A673 (cell line): ENCODE measurements at regions of chr22 and their contacts with region 1.

Region 1: DNA sequence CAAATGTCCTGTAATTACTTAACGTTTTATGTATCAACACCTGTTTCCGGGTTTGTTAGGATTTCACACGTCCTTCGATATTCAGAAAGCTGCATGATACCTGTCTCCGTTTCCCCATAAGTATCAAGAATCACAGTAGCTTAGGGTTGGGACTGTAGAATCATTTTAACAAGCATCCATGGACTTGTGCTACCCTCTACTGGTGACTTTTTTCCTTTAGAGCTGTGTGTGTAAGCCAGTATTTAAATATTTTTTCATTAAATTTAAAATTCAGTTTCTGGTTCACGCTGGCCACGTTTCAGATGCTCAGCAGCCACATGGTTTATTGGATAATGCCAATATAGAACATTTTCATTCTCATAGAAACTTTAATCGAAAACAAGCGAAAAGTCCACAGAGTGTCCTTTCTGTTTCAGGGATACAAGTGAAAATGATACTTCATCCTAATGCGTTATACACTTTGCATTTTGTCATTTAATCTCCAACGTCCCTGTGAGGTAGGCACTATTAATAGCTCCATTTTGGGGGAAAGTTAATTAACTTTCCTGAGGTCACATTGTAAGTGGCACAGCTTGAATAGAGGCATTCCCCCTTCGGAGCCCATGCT is 61.5 kb upstream of the SLC25A18 start:
- DNase-seq: peak; percentile 76
- H3K4me3 ChIP-seq: no peak overlapping the region
- H3K27ac ChIP-seq: no peak overlapping the region
- H3K4me1 ChIP-seq: no peaks in the 10 kb centered on the region
- H3K27me3 ChIP-seq: no peaks in the 10 kb centered on the region
- CTCF ChIP-seq: peak; percentile 79

Region 2: GRCh38 chr22:17074648-17075002 is 427.2 kb before region 1 on chr22:
- CTCF ChIA-PET with region 1: interaction called, 8 read pairs
- POLR2A ChIA-PET with region 1: no interaction called
- intact Hi-C with region 1: loop called (anchors 5 kb)
- DNase-seq: no peak
- H3K4me3 ChIP-seq: no peak overlapping the region
- H3K27ac ChIP-seq: no peak overlapping the region
- H3K4me1 ChIP-seq: no peaks in the 10 kb centered on the region
- H3K27me3 ChIP-seq: peaks cover 4% of the 10 kb centered on the region
- CTCF ChIP-seq: no peak

Region 3: GRCh38 chr22:17171313-17172171 is 330.2 kb before region 1 on chr22:
- CTCF ChIA-PET with region 1: interaction called, 46 read pairs
- POLR2A ChIA-PET with region 1: no interaction called
- intact Hi-C with region 1: loop called (anchors 1 kb)
- DNase-seq: peak; percentile 74
- H3K4me3 ChIP-seq: peak overlapping the region; percentile 69
- H3K27ac ChIP-seq: peak overlapping the region; percentile 65
- H3K4me1 ChIP-seq: no peaks in the 10 kb centered on the region
- H3K27me3 ChIP-seq: no peaks in the 10 kb centered on the region
- CTCF ChIP-seq: peak; percentile 79

Region 4: GRCh38 chr22:17199003-17199731 is 302.6 kb before region 1 on chr22:
- CTCF ChIA-PET with region 1: no interaction called
- POLR2A ChIA-PET with region 1: no interaction called
- intact Hi-C with region 1: loop called (anchors 10 kb)
- DNase-seq: peak; percentile 25
- H3K4me3 ChIP-seq: no peak overlapping the region
- H3K27ac ChIP-seq: no peak overlapping the region
- H3K4me1 ChIP-seq: no peaks in the 10 kb centered on the region
- H3K27me3 ChIP-seq: no peaks in the 10 kb centered on the region
- CTCF ChIP-seq: no peak

Region 5: GRCh38 chr22:17266251-17266971 is 235.4 kb before region 1 on chr22:
- CTCF ChIA-PET with region 1: interaction called, 4 read pairs
- POLR2A ChIA-PET with region 1: no interaction called
- intact Hi-C with region 1: loop called (anchors 5 kb)
- DNase-seq: peak; percentile 98
- H3K4me3 ChIP-seq: peak overlapping the region; percentile 10
- H3K27ac ChIP-seq: peak overlapping the region; percentile 94
- H3K4me1 ChIP-seq: peaks cover 63% of the 10 kb centered on the region
- H3K27me3 ChIP-seq: no peaks in the 10 kb centered on the region
- CTCF ChIP-seq: 0 out of 2 replicates have a peak, but pooled peaks have one; percentile 13

Region 6: DNA sequence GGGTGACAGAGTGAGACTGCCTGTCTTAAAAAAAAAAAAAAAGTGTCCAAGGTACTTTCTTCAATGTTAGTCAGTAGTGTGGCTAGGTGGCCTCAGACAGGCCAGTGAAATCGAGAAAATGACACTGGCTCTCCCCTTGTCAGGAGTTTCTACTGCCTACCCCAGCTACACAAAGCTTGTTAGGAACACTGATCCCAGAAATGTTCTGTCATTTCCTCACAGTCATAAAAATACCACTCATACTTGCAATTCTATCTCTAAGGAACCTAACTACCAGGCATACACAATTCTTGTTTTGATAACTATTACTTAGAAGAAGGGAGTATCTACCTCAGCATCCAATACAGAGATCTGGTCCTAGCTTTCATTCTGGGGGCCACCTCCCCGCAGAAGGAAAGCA is 95.4 kb after region 1 on chr22:
- CTCF ChIA-PET with region 1: no interaction called
- POLR2A ChIA-PET with region 1: no interaction called
- intact Hi-C with region 1: no loop called
- DNase-seq: no peak
- H3K4me3 ChIP-seq: no peak overlapping the region
- H3K27ac ChIP-seq: no peak overlapping the region
- H3K4me1 ChIP-seq: no peaks in the 10 kb centered on the region
- H3K27me3 ChIP-seq: no peaks in the 10 kb centered on the region
- CTCF ChIP-seq: no peak

Region 7: DNA sequence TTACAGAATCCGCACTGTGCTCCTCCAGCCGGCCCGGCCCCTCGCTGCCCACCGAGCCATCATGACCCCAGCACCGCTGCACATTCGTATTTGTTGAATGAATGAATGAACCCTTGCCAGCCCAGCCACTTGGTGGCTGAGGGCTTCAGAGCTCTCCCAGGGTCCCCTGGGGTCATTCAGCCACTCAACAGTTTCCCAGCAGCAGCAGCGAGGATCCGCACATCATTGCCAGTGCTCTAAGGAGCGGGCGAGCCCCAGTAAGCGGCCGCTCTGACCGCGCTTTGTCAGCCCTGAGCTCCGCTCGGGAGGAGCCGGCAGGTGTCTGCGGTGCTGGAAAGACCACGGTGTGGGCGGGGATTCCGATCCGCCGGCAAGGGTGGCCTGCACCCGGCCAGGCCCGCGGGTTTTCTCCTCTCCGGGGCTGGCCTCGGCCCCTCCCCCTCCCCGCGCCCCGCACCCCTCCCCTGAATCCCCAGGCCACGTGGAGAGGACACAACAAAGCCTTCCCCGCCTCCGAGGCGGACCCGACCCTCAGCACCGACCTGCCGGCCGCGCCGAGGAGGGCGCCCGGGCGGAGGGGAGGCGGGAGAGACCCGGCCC is 271.9 kb after region 1 on chr22:
- CTCF ChIA-PET with region 1: no interaction called
- POLR2A ChIA-PET with region 1: no interaction called
- intact Hi-C with region 1: no loop called
- DNase-seq: peak; percentile 55
- H3K4me3 ChIP-seq: peak overlapping the region; percentile 84
- H3K27ac ChIP-seq: peak overlapping the region; percentile 77
- H3K4me1 ChIP-seq: peaks cover 11% of the 10 kb centered on the region
- H3K27me3 ChIP-seq: no peaks in the 10 kb centered on the region
- CTCF ChIP-seq: no peak

Region 8: DNA sequence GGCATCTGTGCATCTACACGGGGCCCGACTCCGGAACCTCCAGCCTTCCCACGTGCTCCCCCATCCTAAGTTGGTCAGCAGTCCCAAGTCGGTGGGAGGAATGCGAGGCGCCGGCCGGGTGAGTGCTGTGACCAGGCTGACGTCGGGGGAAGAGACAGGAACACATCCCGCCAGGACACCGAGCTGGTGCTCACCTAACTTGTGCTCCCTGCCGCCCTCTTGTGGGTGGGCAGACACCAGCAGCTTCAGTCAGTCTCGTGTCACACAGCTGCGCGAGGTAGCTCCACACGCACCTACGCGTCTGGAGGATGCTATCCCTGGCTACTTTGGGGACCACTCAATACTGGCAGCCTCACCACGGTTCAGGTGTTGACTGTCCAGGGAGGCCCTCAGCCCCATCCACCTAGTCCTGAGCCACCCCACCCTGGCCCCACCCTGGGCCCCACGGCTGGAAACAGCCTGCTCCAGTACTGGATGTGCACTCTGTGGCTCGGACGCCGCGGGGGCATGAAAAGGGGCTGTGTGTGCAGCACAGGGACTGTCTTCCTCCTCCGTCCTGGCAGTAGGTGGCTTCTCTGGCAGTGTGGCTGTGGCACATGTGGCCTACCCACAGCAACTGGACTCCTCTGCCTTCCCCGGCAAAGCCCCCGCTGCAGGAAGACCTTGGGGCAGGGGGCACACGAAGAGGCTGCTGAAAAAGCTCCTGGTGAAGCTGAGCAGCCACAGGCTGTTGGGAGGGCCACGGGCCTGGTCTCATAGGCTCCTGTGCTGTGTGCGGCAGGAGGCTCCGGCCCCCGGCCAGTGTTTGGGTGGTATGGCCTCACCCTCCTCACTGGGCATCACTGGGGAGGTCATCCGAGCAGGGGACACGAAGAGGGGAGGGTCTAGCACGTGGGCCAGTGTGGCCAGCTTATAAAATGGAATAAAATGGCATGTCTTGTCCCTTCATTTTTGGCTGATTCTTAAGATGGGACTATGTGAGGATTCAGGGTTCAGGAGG is 283.7 kb after region 1 on chr22:
- CTCF ChIA-PET with region 1: no interaction called
- POLR2A ChIA-PET with region 1: no interaction called
- intact Hi-C with region 1: no loop called
- DNase-seq: peak; percentile 50
- H3K4me3 ChIP-seq: no peak overlapping the region
- H3K27ac ChIP-seq: no peak overlapping the region
- H3K4me1 ChIP-seq: peaks cover 23% of the 10 kb centered on the region
- H3K27me3 ChIP-seq: no peaks in the 10 kb centered on the region
- CTCF ChIP-seq: peak; percentile 64